Vagina (tissue), 2 donors: ENCODE measurements at regions of chr1 and their contacts with region 1.

Region 1: GRCh38 chr1:172670791-172671190 is 11.9 kb downstream of the FASLG start:
- DNase-seq: no peak
- H3K4me3 ChIP-seq: no peak overlapping the region
- H3K27ac ChIP-seq: no peak overlapping the region
- H3K4me1 ChIP-seq: peaks cover 8% of the 10 kb centered on the region
- H3K27me3 ChIP-seq: no peaks in the 10 kb centered on the region
- CTCF ChIP-seq: no peak
- POLR2A ChIP-seq: no peak

Region 2: DNA sequence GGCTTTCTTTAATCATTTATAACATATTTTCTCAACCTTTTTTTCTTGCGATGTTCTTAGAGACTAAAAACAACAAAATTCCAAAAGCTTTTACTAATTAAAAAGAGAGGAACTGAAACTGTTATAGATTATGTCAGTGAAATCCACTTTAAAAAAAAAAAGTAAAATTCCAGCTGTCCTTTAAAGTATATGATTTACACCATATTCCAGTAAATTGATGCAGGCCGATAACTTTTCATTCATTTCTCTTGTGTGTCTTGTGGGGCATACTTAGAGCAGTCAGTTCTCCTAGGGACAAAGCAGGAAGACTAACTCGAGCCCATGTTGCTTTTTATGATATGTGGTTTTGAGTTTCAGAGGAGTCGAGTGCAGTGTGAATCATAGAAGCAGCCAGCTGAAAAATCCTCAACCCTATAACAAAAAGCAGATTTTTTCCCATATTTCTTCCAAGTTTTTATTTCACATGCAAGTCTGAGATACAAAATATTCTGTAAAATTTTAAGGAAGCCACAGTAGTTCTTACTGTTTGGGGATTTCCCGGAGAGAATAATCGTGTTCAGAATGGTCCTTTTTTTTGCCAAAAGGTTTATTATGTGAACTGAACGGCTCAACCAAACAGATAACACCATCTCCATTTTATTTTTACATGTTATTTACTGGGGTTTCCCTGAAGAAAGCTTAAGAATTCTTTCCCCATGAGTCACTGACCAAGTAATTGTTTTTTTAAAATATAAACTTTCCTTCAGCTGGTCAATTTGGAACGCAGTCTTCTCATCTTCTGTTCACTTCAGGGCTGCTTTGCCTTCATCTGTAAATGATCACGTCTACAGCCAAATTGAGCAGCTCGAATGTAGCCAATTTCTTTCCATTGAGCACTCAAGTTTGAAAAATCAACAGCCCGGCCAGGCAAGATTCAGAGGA is 327.3 kb before region 1 on chr1:
- intact Hi-C with region 1: no loop called
- DNase-seq: no peak
- H3K4me3 ChIP-seq: no peak overlapping the region
- H3K27ac ChIP-seq: peak overlapping the region; percentile 51
- H3K4me1 ChIP-seq: peaks cover 22% of the 10 kb centered on the region
- H3K27me3 ChIP-seq: no peaks in the 10 kb centered on the region
- CTCF ChIP-seq: no peak
- POLR2A ChIP-seq: no peak

Region 3: GRCh38 chr1:172622541-172622940 is 48.2 kb before region 1 on chr1:
- intact Hi-C with region 1: no loop called
- DNase-seq: no peak
- H3K4me3 ChIP-seq: no peak overlapping the region
- H3K27ac ChIP-seq: no peak overlapping the region
- H3K4me1 ChIP-seq: no peaks in the 10 kb centered on the region
- H3K27me3 ChIP-seq: no peaks in the 10 kb centered on the region
- CTCF ChIP-seq: no peak
- POLR2A ChIP-seq: no peak

Region 4: GRCh38 chr1:173523329-173523728 is 852.5 kb after region 1 on chr1:
- intact Hi-C with region 1: loop called (anchors 5 kb)
- DNase-seq: no peak
- H3K4me3 ChIP-seq: no peak overlapping the region
- H3K27ac ChIP-seq: no peak overlapping the region
- H3K4me1 ChIP-seq: no peaks in the 10 kb centered on the region
- H3K27me3 ChIP-seq: no peaks in the 10 kb centered on the region
- CTCF ChIP-seq: no peak
- POLR2A ChIP-seq: no peak